OCI-LY7 (cell line): ENCODE measurements at regions of chr3 and their contacts with region 1.

Region 1: DNA sequence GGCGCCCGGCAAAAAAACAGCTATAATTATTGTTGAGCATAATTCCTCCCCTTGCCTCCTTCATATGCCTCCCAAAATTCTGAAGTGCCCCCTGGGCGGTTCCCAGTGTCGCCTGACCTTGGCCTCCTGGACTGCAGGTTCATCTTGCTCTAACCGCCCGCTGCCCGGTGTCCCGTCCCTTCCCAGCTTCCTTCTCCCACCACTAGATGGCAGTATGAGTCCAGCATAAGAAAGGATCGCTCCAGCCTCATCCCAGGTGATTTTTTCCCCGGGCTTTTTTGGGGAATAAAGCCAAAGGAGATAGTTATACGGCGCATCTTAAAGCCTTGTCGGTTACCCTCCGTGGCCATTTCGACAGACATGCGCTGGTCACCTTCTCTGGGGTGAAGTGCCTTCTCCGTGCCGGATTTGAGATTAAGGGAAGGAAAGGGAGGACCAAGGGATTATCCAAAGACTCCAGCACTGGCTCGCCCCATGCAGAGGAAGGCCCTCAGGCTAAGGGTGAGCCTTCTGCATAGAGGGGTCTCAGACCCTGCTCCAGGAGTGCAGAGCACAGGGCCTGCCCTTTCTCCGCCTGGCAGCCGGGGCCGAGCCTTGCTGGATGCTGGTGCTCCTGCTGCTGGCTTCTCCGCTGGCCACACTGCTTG is 45.8 kb upstream of the TRA2B start:
- DNase-seq: peak; percentile 57
- H3K4me3 ChIP-seq: no peak overlapping the region
- H3K27ac ChIP-seq: no peak overlapping the region
- H3K4me1 ChIP-seq: peaks cover 9% of the 10 kb centered on the region
- CTCF ChIP-seq: peak; percentile 96

Region 2: DNA sequence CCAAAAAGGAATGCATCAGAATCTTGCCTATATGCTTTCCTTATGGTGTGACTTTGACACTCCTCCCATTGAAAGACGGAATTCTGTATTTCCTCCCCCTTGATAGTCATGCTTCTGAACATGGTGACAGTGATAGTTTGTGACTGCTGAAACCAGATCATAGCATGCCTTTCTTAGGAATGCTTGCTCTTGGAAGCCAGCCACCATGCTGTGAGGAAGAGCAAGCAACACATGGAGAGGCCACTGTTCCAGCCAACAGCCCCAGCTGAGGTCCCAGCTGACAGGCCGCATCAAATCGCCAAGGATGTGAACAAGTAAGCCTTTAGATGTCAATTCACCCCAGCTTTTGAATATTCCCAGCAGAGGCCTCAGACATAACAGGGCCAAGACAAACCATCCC is 258.9 kb before region 1 on chr3:
- CTCF ChIA-PET with region 1: no interaction called
- POLR2A ChIA-PET with region 1: no interaction called
- intact Hi-C with region 1: no loop called
- DNase-seq: no peak
- H3K4me3 ChIP-seq: no peak overlapping the region
- H3K27ac ChIP-seq: no peak overlapping the region
- H3K4me1 ChIP-seq: no peaks in the 10 kb centered on the region
- CTCF ChIP-seq: no peak

Region 3: GRCh38 chr3:186035277-186035676 is 51.7 kb after region 1 on chr3:
- CTCF ChIA-PET with region 1: no interaction called
- POLR2A ChIA-PET with region 1: no interaction called
- intact Hi-C with region 1: no loop called
- DNase-seq: no peak
- H3K4me3 ChIP-seq: no peak overlapping the region
- H3K27ac ChIP-seq: no peak overlapping the region
- H3K4me1 ChIP-seq: no peaks in the 10 kb centered on the region
- CTCF ChIP-seq: no peak

Region 4: DNA sequence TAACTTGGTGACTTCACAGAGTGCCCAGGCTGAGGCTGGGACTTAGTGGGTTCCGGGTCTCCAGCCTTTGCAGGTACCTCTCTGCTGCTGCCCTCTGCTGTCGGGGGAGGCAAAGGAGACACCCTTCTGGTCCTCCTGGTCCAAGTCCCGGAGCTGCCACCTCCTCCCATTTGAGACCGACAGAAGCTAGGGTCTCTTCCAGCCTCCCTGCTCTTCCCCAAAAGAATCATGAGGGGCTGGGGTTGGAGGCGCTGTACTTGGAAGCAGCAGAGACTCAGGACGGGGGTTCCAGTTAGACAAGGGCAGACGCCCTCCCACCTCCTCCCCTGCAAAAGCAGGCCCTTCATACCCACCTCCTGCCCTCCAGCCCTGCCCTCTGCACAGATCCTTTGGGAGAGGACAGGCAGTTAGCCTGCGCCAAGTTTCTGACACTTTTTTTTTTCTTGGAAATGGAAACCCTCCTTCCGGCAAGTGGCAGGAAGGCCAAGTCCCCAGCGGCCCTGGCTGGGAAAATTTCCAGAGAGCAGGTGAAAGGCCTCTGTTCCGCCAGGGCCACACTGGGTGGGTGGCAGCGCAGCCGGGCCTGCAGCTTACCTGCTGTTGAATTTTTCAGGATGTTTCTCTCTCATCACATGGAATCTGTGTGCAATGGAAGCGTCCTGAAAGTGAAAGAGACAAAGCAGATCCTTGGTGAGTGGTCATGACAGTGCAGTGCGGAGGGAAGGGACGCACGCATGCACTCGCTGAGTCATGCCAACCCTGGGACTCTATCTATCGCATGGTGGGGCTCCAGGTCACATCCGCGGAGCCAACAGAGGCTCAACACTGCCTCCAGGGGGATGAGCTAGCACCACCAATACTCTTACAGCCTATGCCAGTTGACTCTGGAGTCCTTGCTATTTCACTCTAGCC is 258.5 kb after region 1 on chr3:
- CTCF ChIA-PET with region 1: interaction called, 5 read pairs
- POLR2A ChIA-PET with region 1: no interaction called
- intact Hi-C with region 1: loop called (anchors 1 kb)
- DNase-seq: peak; percentile 78
- H3K4me3 ChIP-seq: no peak overlapping the region
- H3K27ac ChIP-seq: no peak overlapping the region
- H3K4me1 ChIP-seq: peaks cover 16% of the 10 kb centered on the region
- CTCF ChIP-seq: peak; percentile 85

Region 5: GRCh38 chr3:186540221-186540834 is 556.7 kb after region 1 on chr3:
- CTCF ChIA-PET with region 1: no interaction called
- POLR2A ChIA-PET with region 1: interaction called, 3 read pairs
- intact Hi-C with region 1: loop called (anchors 2 kb)
- DNase-seq: peak; percentile 83
- H3K4me3 ChIP-seq: no peak overlapping the region
- H3K27ac ChIP-seq: no peak overlapping the region
- H3K4me1 ChIP-seq: peaks cover 16% of the 10 kb centered on the region
- CTCF ChIP-seq: peak; percentile 99

Region 6: DNA sequence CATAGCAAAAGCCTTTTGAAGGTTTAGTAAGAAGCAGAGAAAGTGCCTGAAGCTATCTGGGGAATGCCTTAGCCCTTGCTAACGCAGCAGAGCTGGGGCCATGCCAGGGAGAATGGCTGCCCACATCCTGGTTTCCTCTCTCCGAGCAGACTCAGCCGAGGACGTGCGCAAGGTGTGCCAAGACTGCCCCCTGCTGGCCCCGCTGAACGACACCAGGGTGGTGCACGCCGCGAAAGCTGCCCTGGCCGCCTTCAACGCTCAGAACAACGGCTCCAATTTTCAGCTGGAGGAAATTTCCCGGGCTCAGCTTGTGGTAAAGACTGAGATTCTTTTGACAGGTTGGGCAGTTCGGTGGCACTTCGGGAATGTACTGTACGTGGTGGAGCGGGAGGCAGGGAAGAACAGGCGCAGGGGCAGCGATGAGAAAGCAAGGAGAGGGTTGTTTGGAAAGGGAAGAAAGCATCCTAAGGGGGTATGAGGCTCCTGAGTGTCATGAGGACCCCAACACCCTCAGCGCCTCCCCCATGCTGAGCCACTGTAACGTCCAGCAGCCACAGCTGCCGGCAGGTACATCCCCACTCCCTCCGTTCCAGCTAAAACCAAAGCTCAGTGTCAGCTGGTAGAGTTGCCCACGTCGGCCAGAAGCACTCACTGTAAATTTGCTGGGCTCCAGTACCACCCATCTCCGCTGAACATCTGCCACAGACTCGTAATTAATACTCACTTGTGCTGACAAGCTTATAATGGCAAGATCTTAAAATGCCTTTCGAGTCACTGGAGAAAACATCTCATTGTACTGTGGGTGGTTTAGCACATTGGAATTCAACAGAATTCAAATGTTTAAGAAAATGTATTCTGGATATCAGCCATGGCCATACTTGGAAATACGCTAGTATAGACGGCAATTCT is 633.7 kb after region 1 on chr3:
- CTCF ChIA-PET with region 1: no interaction called
- POLR2A ChIA-PET with region 1: no interaction called
- intact Hi-C with region 1: loop called (anchors 2 kb)
- DNase-seq: peak; percentile 77
- H3K4me3 ChIP-seq: peak overlapping the region; percentile 12
- H3K27ac ChIP-seq: no peak overlapping the region
- H3K4me1 ChIP-seq: peaks cover 18% of the 10 kb centered on the region
- CTCF ChIP-seq: peak; percentile 92